ENCODE measurements at regions of chr16 and their contacts with region 1.

Region 1: DNA sequence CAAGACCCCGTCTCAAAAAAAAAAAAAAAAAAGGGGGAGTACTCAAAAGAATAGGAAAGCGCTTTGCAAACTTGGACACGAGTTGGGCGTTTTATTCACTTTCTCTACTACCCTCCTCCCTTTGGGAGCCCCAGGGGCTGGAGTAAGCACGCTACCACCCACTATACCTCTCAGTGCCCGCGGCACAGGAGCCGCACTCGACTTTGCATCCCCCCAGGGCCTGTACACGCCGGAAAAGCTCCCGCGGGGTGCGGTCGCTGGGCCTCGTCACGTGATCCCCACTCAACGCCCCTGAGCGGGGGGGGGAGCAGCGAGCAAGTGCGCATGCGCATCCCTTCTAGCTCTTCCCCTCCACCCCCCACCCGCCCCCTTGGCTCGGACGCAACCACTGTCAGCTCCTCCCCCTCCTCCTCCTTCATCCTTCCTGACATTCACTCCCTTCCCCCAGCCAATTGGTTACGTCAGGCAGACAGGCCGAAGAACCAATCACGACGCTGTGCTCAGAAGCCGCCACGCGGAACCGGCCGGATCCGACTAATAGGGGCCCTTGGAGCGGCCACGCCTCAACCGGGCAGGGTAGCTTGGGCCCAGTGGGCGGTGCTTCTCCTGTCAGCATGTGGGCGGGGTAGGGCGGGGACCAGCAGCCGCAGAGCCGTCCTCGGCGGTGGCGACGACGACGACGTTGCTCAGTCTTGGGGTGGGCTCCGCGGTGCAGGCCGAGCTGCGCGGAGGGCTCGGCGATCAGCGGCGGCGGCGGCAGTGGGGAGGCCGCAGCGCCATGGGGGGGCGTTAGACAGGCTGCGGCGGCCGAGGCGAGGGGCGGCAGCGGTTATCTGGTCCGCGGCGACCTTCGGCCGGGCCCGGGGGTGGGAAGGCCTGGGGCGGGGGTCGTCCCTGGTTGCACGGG is at the start of gene HAPSTR1:
- DNase-seq: peak; percentile 93 to 100 (median 99)
- ATAC-seq: peak; percentile 86 to 90 (median 88)
- H3K4me3 ChIP-seq: peak within 1 kb of the TSS; percentile 81 to 96
- H3K4me3 Mint-ChIP-seq: peak within 1 kb of the TSS; percentile 94 to 100 (median 100)
- H3K27ac ChIP-seq: peak within 1 kb of the TSS; percentile 90
- H3K27ac Mint-ChIP-seq: peak within 1 kb of the TSS; percentile 93 to 94
- H3K4me1 ChIP-seq: peaks cover 24 to 32% of the 10 kb centered on the region in 2 experiments
- H3K4me1 Mint-ChIP-seq: peaks cover 37 to 44% (median 38%) of the 10 kb centered on the region in 3 donors
- H3K27me3 ChIP-seq: no peaks in the 10 kb centered on the region
- H3K27me3 Mint-ChIP-seq: no peaks in the 10 kb centered on the region
- total RNA-seq, gene HAPSTR1: 79.3 to 123 (median 87.1) TPM

Region 2: DNA sequence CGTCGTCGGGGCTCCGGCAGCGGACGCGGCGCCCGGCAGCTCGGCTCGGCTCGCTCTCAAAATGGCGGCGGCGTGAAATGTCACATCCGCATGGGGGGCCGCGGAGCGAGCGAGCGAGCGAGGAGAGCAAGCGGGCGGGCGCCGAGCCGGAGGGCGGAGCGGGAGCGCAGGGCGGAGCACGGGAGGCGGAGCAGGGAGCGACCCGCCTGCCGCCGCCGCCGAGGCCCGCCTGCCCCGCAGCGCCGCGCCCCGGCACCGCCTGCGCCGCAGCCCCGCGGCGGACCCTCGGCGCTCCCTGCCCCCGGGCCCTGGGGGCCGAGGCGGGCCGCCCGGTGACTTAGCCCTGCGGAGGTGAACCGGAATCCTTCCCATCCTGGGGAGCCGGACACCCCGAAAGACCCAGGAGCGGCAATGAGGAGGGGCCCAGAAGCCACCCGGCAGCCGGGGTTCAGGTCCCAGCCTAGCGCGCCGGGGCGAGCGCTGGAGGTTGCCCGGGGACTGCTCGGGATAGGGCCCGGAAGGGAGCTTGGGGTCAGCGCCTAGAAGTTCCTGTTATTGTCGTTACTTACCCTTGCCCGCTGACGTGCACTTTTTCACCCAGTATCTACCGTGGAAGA is 127.3 kb before region 1 on chr16 and contains the start of gene USP7:
- CTCF ChIA-PET with region 1: no interaction called
- POLR2A ChIA-PET with region 1: interaction called, 3 to 14 read pairs
- DNase-seq: peak; percentile 83 to 97 (median 91)
- ATAC-seq: peak; percentile 88 to 94 (median 90)
- H3K4me3 ChIP-seq: peak within 1 kb of the TSS; percentile 68 to 85
- H3K4me3 Mint-ChIP-seq: peak within 1 kb of the TSS; percentile 95 to 96 (median 95)
- H3K27ac ChIP-seq: peak within 1 kb of the TSS; percentile 60
- H3K27ac Mint-ChIP-seq: peak within 1 kb of the TSS; percentile 36 to 48
- H3K4me1 ChIP-seq: peaks cover 35 to 42% of the 10 kb centered on the region in 2 experiments
- H3K4me1 Mint-ChIP-seq: peaks cover 35 to 39% (median 36%) of the 10 kb centered on the region in 3 donors
- H3K27me3 ChIP-seq: peaks cover 0 to 13% of the 10 kb centered on the region in 2 experiments
- H3K27me3 Mint-ChIP-seq: peaks cover 0 to 10% of the 10 kb centered on the region in 2 donors
- total RNA-seq, gene USP7: 159 to 261 (median 169) TPM

Region 3: GRCh38 chr16:9079430-9079812 is 11.8 kb before region 1 on chr16:
- CTCF ChIA-PET with region 1: interaction called in 1 of 2 experiments, 8 read pairs
- POLR2A ChIA-PET with region 1: interaction called, 3 to 13 read pairs
- DNase-seq: no peak
- ATAC-seq: no peak
- H3K4me3 ChIP-seq: no peak overlapping the region
- H3K4me3 Mint-ChIP-seq: no peak overlapping the region
- H3K27ac ChIP-seq: no peak overlapping the region
- H3K27ac Mint-ChIP-seq: no peak overlapping the region
- H3K4me1 ChIP-seq: no peaks in the 10 kb centered on the region
- H3K4me1 Mint-ChIP-seq: peaks cover 0 to 23% (median 10%) of the 10 kb centered on the region in 3 donors
- H3K27me3 ChIP-seq: peaks cover 0 to 10% of the 10 kb centered on the region in 2 experiments
- H3K27me3 Mint-ChIP-seq: peaks cover 0 to 4% of the 10 kb centered on the region in 2 donors

Region 4: GRCh38 chr16:9102379-9102778 is 11.2 kb after region 1 on chr16:
- CTCF ChIA-PET with region 1: interaction called in 1 of 2 experiments, 9 read pairs
- POLR2A ChIA-PET with region 1: interaction called, 7 to 78 read pairs
- DNase-seq: no peak
- ATAC-seq: no peak
- H3K4me3 ChIP-seq: no peak overlapping the region
- H3K4me3 Mint-ChIP-seq: peak overlapping the region; percentile 54 to 76 (median 58)
- H3K27ac ChIP-seq: peak overlapping the region; percentile 31
- H3K27ac Mint-ChIP-seq: peak overlapping the region; percentile 23 to 71
- H3K4me1 ChIP-seq: peaks cover 57 to 67% of the 10 kb centered on the region in 2 experiments
- H3K4me1 Mint-ChIP-seq: peaks cover 97 to 99% (median 97%) of the 10 kb centered on the region in 3 donors
- H3K27me3 ChIP-seq: no peaks in the 10 kb centered on the region
- H3K27me3 Mint-ChIP-seq: no peaks in the 10 kb centered on the region

Region 5: DNA sequence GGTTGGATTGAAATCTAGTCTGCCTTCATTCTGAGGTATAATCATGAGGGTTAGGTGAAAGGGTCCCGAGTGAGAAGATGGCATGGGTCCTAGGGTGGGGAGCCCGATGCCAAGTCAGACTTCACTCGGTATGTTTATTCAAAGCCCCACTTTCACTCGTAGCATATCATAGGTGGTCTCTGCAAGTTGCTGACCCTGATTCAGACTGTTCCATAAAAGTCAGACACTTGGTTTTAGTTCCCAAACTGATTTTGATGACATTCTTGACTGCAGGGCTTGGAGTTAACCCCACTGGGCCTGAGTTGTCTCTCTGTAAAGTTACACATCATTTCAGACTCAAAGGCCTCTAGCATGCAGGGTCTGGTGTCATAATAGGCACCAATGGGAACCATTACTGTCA is 18.0 kb after region 1 on chr16:
- CTCF ChIA-PET with region 1: interaction called in 1 of 2 experiments, 4 read pairs
- POLR2A ChIA-PET with region 1: interaction called, 3 to 78 read pairs
- DNase-seq: no peak
- ATAC-seq: no peak
- H3K4me3 ChIP-seq: no peak overlapping the region
- H3K4me3 Mint-ChIP-seq: peak overlapping the region; percentile 13 to 63 (median 43)
- H3K27ac ChIP-seq: no peak overlapping the region
- H3K27ac Mint-ChIP-seq: peak overlapping the region; percentile 48 to 53
- H3K4me1 ChIP-seq: peaks cover 41 to 52% of the 10 kb centered on the region in 2 experiments
- H3K4me1 Mint-ChIP-seq: peaks cover 92 to 95% (median 95%) of the 10 kb centered on the region in 3 donors
- H3K27me3 ChIP-seq: no peaks in the 10 kb centered on the region
- H3K27me3 Mint-ChIP-seq: no peaks in the 10 kb centered on the region

Region 6: GRCh38 chr16:9138716-9139501 is 47.7 kb after region 1 on chr16:
- CTCF ChIA-PET with region 1: interaction called in 1 of 2 experiments, 11 read pairs
- POLR2A ChIA-PET with region 1: interaction called, 3 to 5 read pairs
- DNase-seq: peak; percentile 27 to 77 (median 55)
- ATAC-seq: peak; percentile 65 to 78 (median 70)
- H3K4me3 ChIP-seq: peak overlapping the region in 1 of 2 donors; percentile 30
- H3K4me3 Mint-ChIP-seq: peak overlapping the region in 1 of 3 donors; percentile 0
- H3K27ac ChIP-seq: no peak overlapping the region
- H3K27ac Mint-ChIP-seq: no peak overlapping the region
- H3K4me1 ChIP-seq: peaks cover 0 to 15% of the 10 kb centered on the region in 2 experiments
- H3K4me1 Mint-ChIP-seq: peaks cover 20 to 29% (median 27%) of the 10 kb centered on the region in 3 donors
- H3K27me3 ChIP-seq: peaks cover 0 to 19% of the 10 kb centered on the region in 2 experiments
- H3K27me3 Mint-ChIP-seq: peaks cover 8 to 10% of the 10 kb centered on the region in 2 donors

Measured in T-cell (primary cell).